HCT116 (cell line): ENCODE measurements at regions of chr19 and their contacts with region 1.

Region 1: DNA sequence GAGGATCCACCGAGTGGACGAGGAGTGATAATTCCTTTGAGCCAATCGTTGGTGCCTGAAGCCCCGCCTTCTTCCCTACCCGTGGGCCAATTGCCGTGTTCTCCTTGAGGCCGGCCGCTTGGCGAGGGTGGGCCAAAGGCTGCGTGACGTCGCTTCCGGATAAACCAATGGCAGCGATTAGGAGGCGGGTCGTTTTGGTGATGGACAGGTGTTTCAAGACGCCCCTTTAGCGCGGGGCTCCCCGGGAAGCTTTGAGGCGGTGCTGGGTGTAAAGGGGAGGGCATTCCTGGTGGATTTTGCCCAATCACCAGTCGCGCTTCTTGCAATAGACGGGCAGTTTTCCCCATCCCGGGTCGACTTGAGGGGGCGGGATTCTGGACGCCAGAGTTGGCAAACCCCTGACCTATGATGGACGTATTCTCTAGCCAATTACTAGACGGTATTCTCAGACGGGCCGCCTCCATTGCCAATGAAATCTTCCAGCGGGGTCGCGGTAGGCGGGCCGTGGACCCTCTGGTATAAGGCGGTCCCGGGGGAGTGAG is 310 bp upstream of the PRMT1 start:
- DNase-seq: peak; percentile 100
- ATAC-seq: peak; percentile 71
- H3K4me3 ChIP-seq: peak overlapping the region; percentile 93 to 99
- H3K27ac ChIP-seq: peak overlapping the region; percentile 99
- H3K4me1 ChIP-seq: peaks cover 32 to 50% of the 10 kb centered on the region in 2 experiments
- H3K27me3 ChIP-seq: no peaks in the 10 kb centered on the region
- CTCF ChIP-seq: no peak
- POLR2A ChIP-seq: no peak
- RAD21 ChIP-seq: no peak

Region 2: DNA sequence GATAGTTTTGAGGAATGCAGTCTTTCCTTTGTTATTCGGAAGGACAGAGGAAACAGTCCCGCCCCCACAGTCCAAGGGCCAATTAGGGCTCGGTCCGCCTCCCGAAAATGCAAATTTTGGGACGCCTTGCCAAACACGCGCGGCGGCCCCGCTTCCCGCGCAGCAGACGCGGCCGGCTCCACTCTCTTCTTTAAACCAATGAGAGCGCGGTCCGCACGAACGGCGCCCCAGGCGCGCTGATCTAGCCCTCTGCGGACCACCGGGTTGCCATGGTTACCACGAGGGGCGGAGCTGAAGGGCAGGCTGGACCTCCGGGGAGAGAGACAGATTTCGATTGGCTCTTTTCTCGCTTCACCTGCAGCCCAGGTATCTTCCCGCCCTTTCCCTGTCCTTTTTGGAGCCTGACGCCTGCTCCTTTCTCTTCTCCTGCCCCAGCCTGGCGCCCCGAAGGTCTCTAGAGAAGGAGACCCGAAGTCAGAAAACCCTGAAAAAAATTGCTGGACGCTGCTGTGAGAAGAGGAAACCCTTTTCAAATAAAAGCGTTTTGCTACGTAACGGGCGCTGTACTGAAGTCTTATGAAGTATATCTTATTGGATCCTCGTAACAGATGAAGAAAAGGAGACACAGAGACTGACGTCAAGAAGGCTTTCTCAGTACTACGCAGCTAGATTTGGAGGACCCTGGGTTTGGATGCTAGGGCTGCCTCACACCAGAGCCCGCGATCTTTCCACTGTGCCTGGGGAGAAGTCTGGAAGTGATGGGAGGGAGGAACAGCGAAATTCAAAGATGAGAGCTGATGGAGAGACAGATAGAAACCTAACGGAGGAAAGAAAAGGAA is 255.5 kb before region 1 on chr19:
- CTCF ChIA-PET with region 1: no interaction called
- POLR2A ChIA-PET with region 1: no interaction called
- RAD21 ChIA-PET with region 1: no interaction called
- intact Hi-C with region 1: no loop called
- DNase-seq: no peak
- ATAC-seq: peak; percentile 82
- H3K4me3 ChIP-seq: no peak overlapping the region
- H3K27ac ChIP-seq: no peak overlapping the region
- H3K4me1 ChIP-seq: peaks cover 5 to 19% of the 10 kb centered on the region in 2 experiments; a peak in 3 of 4 replicates
- H3K27me3 ChIP-seq: peaks cover 20% of the 10 kb centered on the region; the same call in 1 of the 2 replicates
- CTCF ChIP-seq: no peak
- POLR2A ChIP-seq: no peak
- RAD21 ChIP-seq: no peak

Region 3: DNA sequence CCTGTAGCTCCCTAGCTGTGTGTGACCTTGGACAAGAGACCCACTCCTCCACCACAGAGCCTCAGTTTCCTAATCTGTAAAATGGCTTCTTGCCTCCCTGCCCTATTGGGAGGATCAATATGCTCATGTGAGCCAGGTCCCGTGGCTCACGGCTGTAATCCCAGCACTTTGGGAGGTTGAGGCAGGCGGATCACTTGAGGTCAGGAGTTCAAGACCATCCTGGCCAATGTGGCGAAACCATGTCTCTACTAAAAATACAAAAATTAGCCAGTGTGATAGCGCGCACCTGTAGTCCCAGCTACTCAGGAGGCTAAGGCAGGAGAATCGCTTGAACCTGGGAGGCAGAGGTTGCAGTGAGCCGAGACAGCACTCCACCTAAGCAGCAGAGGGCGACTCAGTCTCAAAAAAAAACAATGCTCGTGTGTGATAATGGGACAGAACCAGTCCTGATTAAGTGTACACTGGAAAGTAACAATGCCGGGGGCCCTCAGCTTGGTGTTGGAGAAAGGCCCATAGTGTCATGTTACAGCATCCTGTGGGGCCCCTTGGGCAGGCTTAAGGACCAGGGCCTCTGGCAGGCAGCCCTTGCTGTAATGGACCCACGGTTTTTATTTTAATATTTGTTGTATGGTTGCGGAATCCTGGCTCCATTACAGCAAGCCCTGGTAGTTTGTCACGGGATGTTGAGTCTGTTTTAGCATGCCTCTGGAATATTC is 173.7 kb before region 1 on chr19:
- CTCF ChIA-PET with region 1: interaction called, 5 read pairs
- POLR2A ChIA-PET with region 1: interaction called, 3 read pairs
- RAD21 ChIA-PET with region 1: no interaction called
- intact Hi-C with region 1: loop called (anchors 2 kb)
- DNase-seq: peak; percentile 54
- ATAC-seq: peak; percentile 60
- H3K4me3 ChIP-seq: no peak overlapping the region
- H3K27ac ChIP-seq: no peak overlapping the region; the same call in 1 of the 2 replicates
- H3K4me1 ChIP-seq: peaks cover 6 to 34% of the 10 kb centered on the region in 2 experiments
- H3K27me3 ChIP-seq: no peaks in the 10 kb centered on the region
- CTCF ChIP-seq: peak; percentile 61 to 80 (median 66)
- POLR2A ChIP-seq: no peak
- RAD21 ChIP-seq: peak; percentile 83

Region 4: GRCh38 chr19:49580264-49581006 is 96.3 kb before region 1 on chr19 and contains the start of gene NOSIP:
- CTCF ChIA-PET with region 1: interaction called, 4 read pairs
- POLR2A ChIA-PET with region 1: interaction called, 15 read pairs
- RAD21 ChIA-PET with region 1: no interaction called
- intact Hi-C with region 1: no loop called
- DNase-seq: peak; percentile 95
- ATAC-seq: peak; percentile 85
- H3K4me3 ChIP-seq: peak within 1 kb of the TSS; percentile 86 to 99
- H3K27ac ChIP-seq: peak within 1 kb of the TSS; percentile 56
- H3K4me1 ChIP-seq: peaks cover 18 to 50% of the 10 kb centered on the region in 2 experiments
- H3K27me3 ChIP-seq: no peaks in the 10 kb centered on the region
- CTCF ChIP-seq: no peak
- POLR2A ChIP-seq: peak; percentile 97
- RAD21 ChIP-seq: no peak
- total RNA-seq, gene NOSIP: 133 TPM

Region 5: GRCh38 chr19:49640113-49640898 is 36.5 kb before region 1 on chr19 and contains the start of gene RRAS:
- CTCF ChIA-PET with region 1: interaction called, 19 read pairs
- POLR2A ChIA-PET with region 1: interaction called, 92 read pairs
- RAD21 ChIA-PET with region 1: interaction called in 1 of 2 experiments, 6 read pairs
- intact Hi-C with region 1: loop called (anchors 1 kb)
- DNase-seq: peak; percentile 99
- ATAC-seq: peak; percentile 76
- H3K4me3 ChIP-seq: peak within 1 kb of the TSS; percentile 75 to 92
- H3K27ac ChIP-seq: peak within 1 kb of the TSS; percentile 98
- H3K4me1 ChIP-seq: peaks cover 15 to 40% of the 10 kb centered on the region in 2 experiments
- H3K27me3 ChIP-seq: no peaks in the 10 kb centered on the region
- CTCF ChIP-seq: no peak
- POLR2A ChIP-seq: peak; percentile 71
- RAD21 ChIP-seq: no peak
- total RNA-seq, gene RRAS: 55.9 TPM

Region 6: GRCh38 chr19:49746206-49747091 is 69.7 kb after region 1 on chr19:
- CTCF ChIA-PET with region 1: no interaction called
- POLR2A ChIA-PET with region 1: no interaction called
- RAD21 ChIA-PET with region 1: no interaction called
- intact Hi-C with region 1: no loop called
- DNase-seq: peak; percentile 90
- ATAC-seq: peak; percentile 91
- H3K4me3 ChIP-seq: no peak overlapping the region
- H3K27ac ChIP-seq: no peak overlapping the region; the same call in 1 of the 2 replicates
- H3K4me1 ChIP-seq: peaks cover 4 to 18% of the 10 kb centered on the region in 2 experiments; a peak in 3 of 4 replicates
- H3K27me3 ChIP-seq: no peaks in the 10 kb centered on the region
- CTCF ChIP-seq: peak in 1 of 3 experiments; percentile 14; a peak in 1 of 6 replicates
- POLR2A ChIP-seq: no peak
- RAD21 ChIP-seq: no peak

Region 7: GRCh38 chr19:49766007-49766937 is 89.5 kb after region 1 on chr19:
- CTCF ChIA-PET with region 1: no interaction called
- POLR2A ChIA-PET with region 1: interaction called, 5 read pairs
- RAD21 ChIA-PET with region 1: no interaction called
- intact Hi-C with region 1: loop called (anchors 1 kb)
- DNase-seq: peak; percentile 100
- ATAC-seq: peak; percentile 91
- H3K4me3 ChIP-seq: peak overlapping the region; percentile 91 to 97
- H3K27ac ChIP-seq: peak overlapping the region; percentile 88
- H3K4me1 ChIP-seq: peaks cover 21 to 37% of the 10 kb centered on the region in 2 experiments
- H3K27me3 ChIP-seq: no peaks in the 10 kb centered on the region
- CTCF ChIP-seq: no peak
- POLR2A ChIP-seq: peak; percentile 47
- RAD21 ChIP-seq: no peak

Region 8: DNA sequence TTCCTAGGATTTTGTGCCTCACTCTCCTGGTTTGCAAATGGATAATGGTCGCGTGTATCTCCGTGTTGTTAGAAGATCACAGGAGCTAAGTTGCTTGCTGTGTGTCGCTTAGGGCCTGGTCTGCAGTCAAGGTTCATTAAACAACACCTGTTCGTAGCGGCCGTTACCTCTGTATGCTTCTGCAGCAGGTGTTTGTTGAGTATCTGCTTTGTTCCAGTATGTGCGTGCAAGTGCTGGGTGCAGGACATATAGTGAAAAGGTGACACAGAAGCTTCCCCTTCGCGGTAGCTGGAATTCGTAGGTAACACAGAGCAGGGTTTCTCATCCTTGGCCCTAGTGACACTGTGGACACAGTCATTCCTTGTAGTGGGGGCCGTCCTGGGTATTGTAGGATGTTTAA is 146.7 kb after region 1 on chr19:
- CTCF ChIA-PET with region 1: no interaction called
- POLR2A ChIA-PET with region 1: no interaction called
- RAD21 ChIA-PET with region 1: no interaction called
- intact Hi-C with region 1: no loop called
- DNase-seq: no peak
- ATAC-seq: no peak
- H3K4me3 ChIP-seq: no peak overlapping the region
- H3K27ac ChIP-seq: no peak overlapping the region
- H3K4me1 ChIP-seq: peaks cover 4 to 9% of the 10 kb centered on the region in 2 experiments
- H3K27me3 ChIP-seq: no peaks in the 10 kb centered on the region
- CTCF ChIP-seq: no peak
- POLR2A ChIP-seq: no peak
- RAD21 ChIP-seq: no peak

Region 9: GRCh38 chr19:49843265-49843664 is 166.5 kb after region 1 on chr19:
- CTCF ChIA-PET with region 1: no interaction called
- POLR2A ChIA-PET with region 1: no interaction called
- RAD21 ChIA-PET with region 1: no interaction called
- intact Hi-C with region 1: no loop called
- DNase-seq: no peak
- ATAC-seq: no peak
- H3K4me3 ChIP-seq: no peak overlapping the region
- H3K27ac ChIP-seq: no peak overlapping the region
- H3K4me1 ChIP-seq: peaks cover 8% of the 10 kb centered on the region in 2 experiments
- H3K27me3 ChIP-seq: no peaks in the 10 kb centered on the region
- CTCF ChIP-seq: no peak
- POLR2A ChIP-seq: no peak
- RAD21 ChIP-seq: no peak